Activated B cell treated with CpG ODN at 0.5 μM for 24 hours (primary cell): ENCODE measurements at regions of chr1 and their contacts with region 1.

Region 1: GRCh38 chr1:51729156-51729823 is 112.4 kb downstream of the OSBPL9 start:
- DNase-seq: peak; percentile 89
- ATAC-seq: peak; percentile 96
- H3K4me3 Mint-ChIP-seq: peak overlapping the region; percentile 95
- H3K27ac Mint-ChIP-seq: peak overlapping the region; percentile 87
- H3K4me1 Mint-ChIP-seq: peaks cover 48% of the 10 kb centered on the region
- H3K27me3 Mint-ChIP-seq: no peaks in the 10 kb centered on the region
- CTCF ChIP-seq: no peak

Region 2: DNA sequence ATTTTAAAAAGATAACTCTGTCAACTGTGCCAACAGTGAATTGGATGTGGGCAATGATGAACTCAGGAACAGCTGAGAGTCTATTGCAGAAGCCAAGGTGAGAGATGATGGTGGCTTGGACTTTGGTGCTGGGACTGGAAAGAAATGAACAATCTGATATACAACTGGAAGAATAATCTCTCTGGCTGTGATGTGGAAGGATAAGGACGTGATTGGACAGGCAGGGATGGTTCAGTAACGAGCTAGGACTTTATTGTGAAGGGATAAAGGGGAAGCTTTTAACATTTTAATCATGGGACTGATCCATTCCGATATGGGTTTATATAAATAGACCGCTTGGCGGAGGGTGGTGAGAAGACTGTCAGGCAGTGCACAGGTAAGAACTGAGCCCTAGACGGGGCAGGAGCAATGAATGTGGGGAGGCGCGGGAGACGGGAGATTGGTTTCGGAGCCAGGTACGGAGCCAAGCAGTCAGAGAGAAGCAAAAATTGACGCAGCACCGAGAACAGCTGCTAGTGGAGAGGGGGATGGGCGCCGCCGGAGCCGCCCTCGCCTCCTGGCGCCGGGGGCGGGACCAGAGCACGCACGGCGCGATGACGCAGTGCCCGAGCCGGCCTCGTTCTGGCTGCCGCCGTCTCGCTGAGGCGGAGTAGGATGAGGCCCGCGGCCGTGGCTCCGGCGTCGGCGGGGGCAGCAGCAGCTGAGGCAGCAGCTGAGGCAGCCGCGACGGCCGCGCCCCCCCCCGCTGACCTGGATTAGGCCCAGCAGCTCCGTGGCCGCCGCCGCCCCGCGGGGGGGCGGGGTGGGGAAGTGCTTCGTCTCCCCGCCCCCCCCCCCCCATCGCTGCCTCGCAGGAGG is 493.4 kb before region 1 on chr1 and contains the start of gene RNF11:
- CTCF ChIA-PET with region 1: no interaction called
- POLR2A ChIA-PET with region 1: no interaction called
- intact Hi-C with region 1: loop called (anchors 10 kb)
- DNase-seq: peak; percentile 94
- ATAC-seq: peak; percentile 74
- H3K4me3 Mint-ChIP-seq: peak within 1 kb of the TSS; percentile 92
- H3K27ac Mint-ChIP-seq: peak within 1 kb of the TSS; percentile 93
- H3K4me1 Mint-ChIP-seq: peaks cover 24% of the 10 kb centered on the region
- H3K27me3 Mint-ChIP-seq: peaks cover 4% of the 10 kb centered on the region
- CTCF ChIP-seq: no peak
- total RNA-seq, gene RNF11: 15.3 and 17.1 TPM in 2 replicates

Region 3: DNA sequence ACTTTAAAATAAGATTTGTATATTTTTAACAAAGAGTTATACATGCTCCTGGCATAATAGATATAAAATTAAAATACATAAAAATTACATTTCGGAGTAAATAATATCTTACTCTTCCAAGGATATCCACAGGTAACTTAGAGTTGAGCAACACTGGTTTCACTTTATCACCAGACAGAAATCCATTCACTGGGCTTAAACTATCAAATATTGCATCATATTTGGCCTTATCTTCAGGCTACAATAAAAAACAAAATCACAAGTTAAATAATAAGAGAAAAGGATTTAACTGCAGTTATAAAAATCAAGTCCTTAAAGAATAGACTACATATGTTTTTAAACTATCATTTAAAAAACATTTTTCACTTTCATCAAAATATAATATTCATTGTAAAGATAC is 265.7 kb before region 1 on chr1:
- CTCF ChIA-PET with region 1: no interaction called
- POLR2A ChIA-PET with region 1: no interaction called
- intact Hi-C with region 1: no loop called
- DNase-seq: no peak
- ATAC-seq: no peak
- H3K4me3 Mint-ChIP-seq: no peak overlapping the region
- H3K27ac Mint-ChIP-seq: no peak overlapping the region
- H3K4me1 Mint-ChIP-seq: no peaks in the 10 kb centered on the region
- H3K27me3 Mint-ChIP-seq: no peaks in the 10 kb centered on the region
- CTCF ChIP-seq: no peak

Region 4: DNA sequence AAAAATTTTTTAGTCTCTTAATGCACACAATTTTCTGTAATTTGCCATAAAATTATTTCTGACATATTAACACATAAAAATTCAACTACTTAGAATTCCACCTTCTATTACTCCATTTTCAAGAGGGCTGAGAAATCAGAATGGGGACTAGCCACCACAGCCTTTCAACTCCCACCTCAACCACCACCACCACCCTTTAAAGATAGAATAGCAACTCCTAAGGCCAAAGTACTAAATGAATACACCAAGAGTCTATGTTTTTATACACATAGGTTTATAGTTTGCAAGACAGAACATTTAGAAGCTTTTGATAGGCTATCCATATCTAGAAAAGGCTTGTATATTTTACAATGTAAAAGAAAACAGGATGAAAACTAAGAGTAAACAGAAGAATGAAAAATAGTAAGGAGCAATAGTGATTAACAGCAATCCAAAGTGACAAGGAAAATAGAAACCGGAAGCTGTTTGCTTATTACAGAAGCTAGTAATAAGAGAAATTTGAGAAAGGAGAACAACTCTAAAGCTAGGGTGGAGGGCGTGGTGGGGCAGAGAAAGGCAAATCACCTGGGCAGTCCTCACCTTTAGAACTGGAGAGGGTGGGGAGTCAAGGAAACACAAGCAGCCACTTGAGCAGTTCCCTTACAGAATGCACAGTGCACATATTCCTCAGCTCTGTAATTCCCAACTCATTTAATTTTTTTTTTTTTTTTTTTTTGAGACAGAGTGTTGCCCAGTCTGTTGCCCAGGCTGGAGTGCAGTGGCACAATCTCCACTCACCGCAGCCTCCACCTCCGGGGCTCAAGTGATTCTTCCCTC is 237.9 kb before region 1 on chr1:
- CTCF ChIA-PET with region 1: no interaction called
- POLR2A ChIA-PET with region 1: interaction called, 13 read pairs
- intact Hi-C with region 1: no loop called
- DNase-seq: no peak
- ATAC-seq: peak; percentile 65
- H3K4me3 Mint-ChIP-seq: peak overlapping the region; percentile 68
- H3K27ac Mint-ChIP-seq: peak overlapping the region; percentile 85
- H3K4me1 Mint-ChIP-seq: peaks cover 69% of the 10 kb centered on the region
- H3K27me3 Mint-ChIP-seq: no peaks in the 10 kb centered on the region
- CTCF ChIP-seq: no peak

Region 5: GRCh38 chr1:51616901-51617708 is 112.2 kb before region 1 on chr1 and contains the start of gene OSBPL9:
- CTCF ChIA-PET with region 1: no interaction called
- POLR2A ChIA-PET with region 1: no interaction called
- intact Hi-C with region 1: loop called (anchors 1 kb)
- DNase-seq: peak; percentile 64
- ATAC-seq: peak; percentile 95
- H3K4me3 Mint-ChIP-seq: peak within 1 kb of the TSS; percentile 99
- H3K27ac Mint-ChIP-seq: peak within 1 kb of the TSS; percentile 94
- H3K4me1 Mint-ChIP-seq: peaks cover 32% of the 10 kb centered on the region
- H3K27me3 Mint-ChIP-seq: no peaks in the 10 kb centered on the region
- CTCF ChIP-seq: no peak
- total RNA-seq, gene OSBPL9: 58.2 and 63.7 TPM in 2 replicates

Region 6: DNA sequence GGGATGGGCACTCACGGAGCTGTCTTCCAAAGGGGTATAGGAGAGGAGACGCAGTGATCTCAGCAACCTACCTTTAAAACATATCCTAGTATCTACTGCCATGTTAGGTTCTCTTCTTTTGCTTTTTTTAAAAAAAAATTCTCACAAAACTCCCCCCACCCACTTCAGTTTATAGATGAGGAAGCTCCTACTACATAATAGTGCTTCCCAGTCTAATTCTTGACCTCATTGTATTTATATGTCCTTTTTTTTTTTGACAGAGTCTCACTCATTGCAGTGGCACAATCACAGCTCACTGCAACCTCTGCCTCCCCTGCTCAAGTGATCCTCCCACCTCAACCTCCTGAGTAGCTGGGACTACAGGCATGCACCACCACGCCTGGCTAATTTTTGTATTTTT is 12.5 kb before region 1 on chr1:
- CTCF ChIA-PET with region 1: no interaction called
- POLR2A ChIA-PET with region 1: interaction called, 10 read pairs
- intact Hi-C with region 1: no loop called
- DNase-seq: no peak
- ATAC-seq: no peak
- H3K4me3 Mint-ChIP-seq: no peak overlapping the region
- H3K27ac Mint-ChIP-seq: no peak overlapping the region
- H3K4me1 Mint-ChIP-seq: no peaks in the 10 kb centered on the region
- H3K27me3 Mint-ChIP-seq: no peaks in the 10 kb centered on the region
- CTCF ChIP-seq: no peak

Region 7: GRCh38 chr1:51768971-51769588 is 39.8 kb after region 1 on chr1:
- CTCF ChIA-PET with region 1: interaction called, 7 read pairs
- POLR2A ChIA-PET with region 1: interaction called, 15 read pairs
- intact Hi-C with region 1: loop called (anchors 5 kb)
- DNase-seq: no peak
- ATAC-seq: peak; percentile 73
- H3K4me3 Mint-ChIP-seq: no peak overlapping the region
- H3K27ac Mint-ChIP-seq: peak overlapping the region; percentile 8
- H3K4me1 Mint-ChIP-seq: peaks cover 10% of the 10 kb centered on the region
- H3K27me3 Mint-ChIP-seq: no peaks in the 10 kb centered on the region
- CTCF ChIP-seq: no peak

Region 8: DNA sequence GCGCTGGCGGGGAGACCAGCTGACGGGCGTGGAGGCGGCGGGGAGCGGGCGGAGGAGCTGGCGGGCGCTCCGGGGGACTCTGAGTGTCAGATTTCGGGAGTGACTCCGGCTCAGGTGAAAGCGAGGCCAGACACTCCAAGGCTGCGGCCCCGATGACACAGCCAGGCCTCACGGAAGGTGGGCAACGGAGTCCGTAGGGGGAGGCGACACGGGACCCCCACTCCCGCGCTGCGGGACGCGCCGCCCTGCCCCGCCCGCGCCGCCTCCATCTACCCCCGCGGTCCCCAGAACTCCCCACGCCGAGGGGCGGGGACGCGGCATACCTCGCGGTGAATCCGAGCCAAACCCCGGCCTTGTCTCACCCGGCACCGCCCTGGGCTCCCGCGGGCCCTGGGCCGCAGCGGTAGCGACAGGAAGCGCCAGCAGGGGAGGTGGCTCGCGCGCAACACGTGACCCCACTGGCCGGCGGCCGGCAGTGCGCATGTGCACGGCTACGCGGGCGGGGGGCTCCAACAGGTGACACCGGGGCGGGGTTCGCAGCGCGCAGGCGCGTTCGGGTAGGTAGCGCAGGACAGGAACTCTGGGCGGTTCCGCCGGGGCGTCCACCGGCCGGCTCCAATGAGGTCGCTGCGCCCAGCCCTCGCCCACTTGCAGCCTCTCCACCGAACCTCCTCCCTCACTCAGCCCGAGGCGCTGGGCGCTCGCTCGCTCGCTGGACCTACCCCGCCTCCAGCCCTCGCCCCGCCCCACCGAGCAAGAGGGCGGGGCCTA is 636.6 kb after region 1 on chr1 and contains the start of gene CC2D1B:
- CTCF ChIA-PET with region 1: no interaction called
- POLR2A ChIA-PET with region 1: interaction called, 10 read pairs
- intact Hi-C with region 1: no loop called
- DNase-seq: peak; percentile 100
- ATAC-seq: peak; percentile 95
- H3K4me3 Mint-ChIP-seq: peak within 1 kb of the TSS; percentile 94
- H3K27ac Mint-ChIP-seq: peak within 1 kb of the TSS; percentile 88
- H3K4me1 Mint-ChIP-seq: peaks cover 30% of the 10 kb centered on the region
- H3K27me3 Mint-ChIP-seq: peaks cover 2% of the 10 kb centered on the region
- CTCF ChIP-seq: no peak
- total RNA-seq, gene CC2D1B: 51.3 and 66.4 TPM in 2 replicates